ENCODE measurements at regions of chr3 and their contacts with region 1.

Region 1: GRCh38 chr3:115217678-115218451 is 70.8 kb upstream of the ZBTB20 start:
- DNase-seq: peak; percentile 71
- ATAC-seq: peak; percentile 97
- H3K4me3 ChIP-seq: no peak overlapping the region
- H3K27ac ChIP-seq: 0 out of 2 replicates have a peak overlapping the region, but pooled peaks have one; percentile 42
- H3K4me1 ChIP-seq: peaks cover 3% of the 10 kb centered on the region; the same call in 1 of the 2 replicates
- H3K27me3 ChIP-seq: no peaks in the 10 kb centered on the region
- CTCF ChIP-seq: peak; percentile 93
- POLR2A ChIP-seq: no peak
- RAD21 ChIP-seq: peak; percentile 93

Region 2: GRCh38 chr3:115436767-115437301 is 219.0 kb after region 1 on chr3:
- CTCF ChIA-PET with region 1: interaction called, 5 read pairs
- POLR2A ChIA-PET with region 1: no interaction called
- dilution Hi-C with region 1: no loop called
- in situ Hi-C with region 1: no loop called
- intact Hi-C with region 1: loop called (anchors 1 kb)
- DNase-seq: peak; percentile 93
- ATAC-seq: peak; percentile 92
- H3K4me3 ChIP-seq: no peak overlapping the region
- H3K27ac ChIP-seq: no peak overlapping the region
- H3K4me1 ChIP-seq: peaks cover 3% of the 10 kb centered on the region; the same call in 1 of the 2 replicates
- H3K27me3 ChIP-seq: no peaks in the 10 kb centered on the region
- CTCF ChIP-seq: peak; percentile 48
- POLR2A ChIP-seq: no peak
- RAD21 ChIP-seq: peak; percentile 58